Endothelial cell of umbilical vein (primary cell): ENCODE measurements at regions of chr2 and their contacts with region 1.

Region 1: DNA sequence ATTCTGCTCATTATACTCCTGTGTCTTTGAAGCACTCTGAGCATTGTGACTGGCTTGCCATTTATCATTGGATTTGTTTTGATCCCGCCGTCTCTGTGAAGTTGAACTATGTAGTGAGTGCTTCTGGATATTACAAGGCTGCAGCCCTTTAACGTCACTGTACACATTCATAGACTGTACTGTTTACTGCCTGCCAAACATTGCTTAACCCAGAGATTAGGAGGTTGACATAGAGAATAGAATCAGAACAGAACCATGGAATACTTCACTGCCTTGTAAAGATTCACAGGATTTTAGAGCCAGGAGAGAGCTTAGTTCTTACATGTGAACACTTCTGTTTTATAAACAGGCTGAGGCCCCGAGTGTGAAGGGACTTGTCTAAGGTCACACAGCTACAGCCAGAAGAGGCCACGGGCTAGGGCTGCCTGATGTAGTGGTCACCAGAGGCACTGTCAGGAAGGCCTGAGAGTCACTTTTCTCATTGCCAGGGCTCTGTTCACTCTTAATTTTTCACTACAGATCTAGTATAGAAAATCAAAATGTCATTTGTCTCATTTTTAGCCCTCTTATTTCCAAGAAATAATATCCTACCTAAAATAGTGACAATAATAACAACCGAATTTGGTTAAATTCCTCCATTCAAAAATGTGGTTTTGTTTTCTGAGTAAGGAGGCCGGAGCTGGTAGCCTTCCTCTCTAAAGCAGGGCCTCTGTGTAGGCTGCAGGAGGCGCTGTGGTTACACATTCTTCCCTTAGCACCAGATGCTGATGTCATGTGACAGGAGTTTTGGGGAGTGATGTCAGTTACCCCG is 87.9 kb downstream of the UGGT1 start:
- DNase-seq: peak; percentile 74
- H3K4me3 ChIP-seq: no peak overlapping the region
- H3K27ac ChIP-seq: peak overlapping the region; percentile 48
- H3K4me1 ChIP-seq: peaks cover 23% of the 10 kb centered on the region
- H3K27me3 ChIP-seq: no peaks in the 10 kb centered on the region
- CTCF ChIP-seq: peak; percentile 82 to 93
- POLR2A ChIP-seq: no peak

Region 2: GRCh38 chr2:128232965-128233789 is 54.3 kb after region 1 on chr2:
- CTCF ChIA-PET with region 1: interaction called, 66 read pairs
- POLR2A ChIA-PET with region 1: no interaction called
- dilution Hi-C with region 1: no loop called
- intact Hi-C with region 1: loop called (anchors 1 kb)
- DNase-seq: peak; percentile 72
- H3K4me3 ChIP-seq: peak overlapping the region; percentile 52 to 70 (median 57)
- H3K27ac ChIP-seq: no peak overlapping the region
- H3K4me1 ChIP-seq: peaks cover 13% of the 10 kb centered on the region
- H3K27me3 ChIP-seq: no peaks in the 10 kb centered on the region
- CTCF ChIP-seq: peak; percentile 83 to 98
- POLR2A ChIP-seq: no peak

Region 3: GRCh38 chr2:128536925-128537620 is 358.2 kb after region 1 on chr2:
- CTCF ChIA-PET with region 1: no interaction called
- POLR2A ChIA-PET with region 1: no interaction called
- dilution Hi-C with region 1: no loop called
- intact Hi-C with region 1: loop called (anchors 10 kb)
- DNase-seq: peak; percentile 35
- H3K4me3 ChIP-seq: no peak overlapping the region
- H3K27ac ChIP-seq: no peak overlapping the region
- H3K4me1 ChIP-seq: no peaks in the 10 kb centered on the region
- H3K27me3 ChIP-seq: no peaks in the 10 kb centered on the region
- CTCF ChIP-seq: no peak
- POLR2A ChIP-seq: no peak

Region 4: DNA sequence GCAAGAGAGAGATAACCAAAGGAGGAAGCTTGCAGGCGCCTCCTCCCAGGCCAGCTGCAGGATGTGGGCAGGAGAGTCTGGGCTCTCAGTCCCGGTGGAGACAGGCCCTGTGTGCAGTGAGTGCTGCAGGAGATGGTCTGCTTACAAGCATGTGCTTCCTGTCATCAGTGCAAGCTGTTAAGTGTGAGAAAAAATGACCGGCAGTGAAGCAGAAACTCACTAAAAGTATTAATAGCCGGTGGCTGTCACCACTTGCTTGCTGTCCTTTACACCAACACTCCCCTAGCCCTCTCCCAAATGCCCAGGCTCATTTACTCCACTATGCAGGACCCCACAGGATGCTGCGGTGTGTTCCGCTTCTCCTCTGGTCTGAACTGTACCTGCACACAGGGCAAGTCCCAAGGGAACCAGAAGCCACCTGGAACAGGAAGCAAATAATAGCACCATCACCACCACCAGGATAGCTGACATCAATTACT is 575.4 kb after region 1 on chr2:
- CTCF ChIA-PET with region 1: no interaction called
- POLR2A ChIA-PET with region 1: no interaction called
- dilution Hi-C with region 1: no loop called
- intact Hi-C with region 1: loop called (anchors 2 kb)
- DNase-seq: no peak
- H3K4me3 ChIP-seq: no peak overlapping the region
- H3K27ac ChIP-seq: no peak overlapping the region
- H3K4me1 ChIP-seq: no peaks in the 10 kb centered on the region
- H3K27me3 ChIP-seq: no peaks in the 10 kb centered on the region
- CTCF ChIP-seq: no peak
- POLR2A ChIP-seq: no peak